Activated CD4-positive, alpha-beta memory T cell treated with anti-CD3 and anti-CD28 coated beads, Interleukin-2, amount 10 ng/mL, durations not matched to agents 7 days and 5 days (primary cell): ENCODE measurements at regions of chrX and their contacts with region 1.

Region 1: DNA sequence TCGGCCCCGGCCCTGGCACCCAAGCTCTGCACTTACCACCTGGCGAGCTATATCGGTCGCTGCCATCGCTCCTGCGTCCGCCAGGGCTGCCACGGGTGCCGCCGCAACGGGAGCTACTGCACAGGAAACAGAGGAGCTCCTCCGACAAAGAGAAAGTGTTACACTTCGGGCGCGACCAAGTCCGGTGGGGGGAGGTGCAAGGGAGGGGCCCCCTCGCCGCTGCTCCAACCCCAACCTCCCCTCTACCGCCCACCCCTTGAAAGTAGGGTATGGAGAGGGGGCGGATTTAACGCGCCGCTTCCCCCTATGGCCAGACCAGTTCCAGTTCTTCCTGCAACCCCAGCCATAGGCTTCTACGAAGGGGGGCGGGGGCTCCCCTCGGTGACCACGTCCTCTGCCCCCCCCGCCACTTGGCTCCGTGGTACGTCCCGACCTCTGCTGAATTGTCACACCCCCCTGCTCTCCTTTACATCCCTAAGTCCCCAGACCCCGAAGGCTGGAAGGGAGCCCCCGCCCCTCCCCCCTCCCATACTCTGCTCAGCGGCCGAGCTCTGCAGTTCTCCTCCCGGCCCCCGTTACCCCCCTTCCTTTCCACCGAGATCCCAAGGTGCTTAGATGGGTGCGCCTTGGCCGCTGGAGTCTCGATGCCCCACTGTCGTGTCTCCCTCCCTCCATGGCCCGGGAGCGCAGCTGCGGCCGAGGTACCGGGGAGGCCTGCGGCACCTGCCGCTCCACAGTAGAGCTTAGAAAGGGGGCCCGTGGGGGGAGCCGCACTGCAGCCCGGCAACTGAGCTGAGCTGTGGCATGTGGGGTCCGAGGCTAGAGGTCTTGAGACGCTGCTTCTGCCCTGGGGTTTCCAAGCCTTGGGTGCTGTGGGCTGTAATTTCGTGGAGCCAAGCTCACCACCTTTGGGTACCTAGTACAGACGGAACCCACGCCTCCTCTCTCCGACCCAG is at the start of gene SEPTIN6:
- DNase-seq: peak; percentile 86
- H3K4me3 Mint-ChIP-seq: peak within 1 kb of the TSS; percentile 98
- H3K27ac Mint-ChIP-seq: peak within 1 kb of the TSS; percentile 100
- H3K4me1 Mint-ChIP-seq: peaks cover 17% of the 10 kb centered on the region
- H3K27me3 Mint-ChIP-seq: no peaks in the 10 kb centered on the region
- total RNA-seq, gene SEPTIN6: 214 to 219 TPM

Region 2: DNA sequence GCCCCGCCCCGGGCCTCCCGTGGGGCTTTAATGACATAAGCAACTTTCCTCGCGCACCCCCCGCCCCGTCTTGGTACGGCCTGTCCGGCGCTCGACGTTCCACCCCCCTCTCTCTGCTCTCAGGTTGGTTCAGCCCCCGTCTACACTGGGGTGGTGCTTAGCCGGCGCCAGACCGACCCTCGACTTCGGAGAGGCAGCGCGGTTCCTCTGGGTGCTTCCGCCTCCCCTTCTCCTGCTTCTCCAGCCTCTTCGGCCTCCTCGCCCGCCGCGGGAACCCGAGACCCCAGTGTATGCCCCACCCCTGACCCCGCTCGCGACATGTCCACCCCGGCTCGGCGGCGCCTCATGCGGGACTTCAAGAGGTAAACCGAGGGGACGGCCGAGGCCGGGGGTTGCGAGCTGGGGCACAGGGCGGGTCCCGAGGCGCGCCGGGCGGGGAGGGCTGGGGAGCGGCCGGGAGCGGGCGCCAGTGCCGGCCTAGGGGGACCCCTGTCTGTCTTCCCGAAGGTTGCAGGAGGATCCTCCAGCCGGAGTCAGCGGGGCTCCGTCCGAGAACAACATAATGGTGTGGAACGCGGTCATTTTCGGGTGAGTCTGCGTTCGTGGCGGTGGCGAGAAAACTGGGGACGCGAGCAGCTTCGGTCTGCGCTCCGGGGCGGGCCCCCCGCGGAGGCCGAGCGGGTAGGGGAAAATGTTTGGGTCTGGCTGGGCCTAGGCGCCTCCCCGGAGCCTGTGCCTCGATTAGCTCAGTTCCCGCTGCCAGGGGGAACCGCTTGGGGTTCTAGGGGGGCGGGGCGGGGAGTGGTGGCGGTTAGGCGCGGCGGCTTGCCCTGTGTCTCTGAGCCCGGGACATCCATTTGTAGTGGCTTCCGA is 118.7 kb before region 1 on chrX and contains the start of gene UBE2A:
- CTCF ChIA-PET with region 1: no interaction called
- POLR2A ChIA-PET with region 1: interaction called, 17 read pairs
- DNase-seq: peak; percentile 88
- H3K4me3 Mint-ChIP-seq: peak within 1 kb of the TSS; percentile 93
- H3K27ac Mint-ChIP-seq: peak within 1 kb of the TSS; percentile 81
- H3K4me1 Mint-ChIP-seq: peaks cover 30% of the 10 kb centered on the region
- H3K27me3 Mint-ChIP-seq: no peaks in the 10 kb centered on the region
- total RNA-seq, gene UBE2A: 76.2 to 79.6 TPM

Region 3: GRCh38 chrX:119647552-119648420 is 45.5 kb before region 1 on chrX:
- CTCF ChIA-PET with region 1: interaction called, 3 read pairs
- POLR2A ChIA-PET with region 1: interaction called, 44 read pairs
- DNase-seq: peak; percentile 70
- H3K4me3 Mint-ChIP-seq: no peak overlapping the region
- H3K27ac Mint-ChIP-seq: peak overlapping the region; percentile 89
- H3K4me1 Mint-ChIP-seq: peaks cover 38% of the 10 kb centered on the region
- H3K27me3 Mint-ChIP-seq: no peaks in the 10 kb centered on the region

Region 4: GRCh38 chrX:119729408-119730201 is 36.3 kb after region 1 on chrX:
- CTCF ChIA-PET with region 1: interaction called, 45 read pairs
- POLR2A ChIA-PET with region 1: interaction called, 48 read pairs
- DNase-seq: peak; percentile 71
- H3K4me3 Mint-ChIP-seq: no peak overlapping the region
- H3K27ac Mint-ChIP-seq: no peak overlapping the region
- H3K4me1 Mint-ChIP-seq: peaks cover 6% of the 10 kb centered on the region
- H3K27me3 Mint-ChIP-seq: no peaks in the 10 kb centered on the region

Region 5: DNA sequence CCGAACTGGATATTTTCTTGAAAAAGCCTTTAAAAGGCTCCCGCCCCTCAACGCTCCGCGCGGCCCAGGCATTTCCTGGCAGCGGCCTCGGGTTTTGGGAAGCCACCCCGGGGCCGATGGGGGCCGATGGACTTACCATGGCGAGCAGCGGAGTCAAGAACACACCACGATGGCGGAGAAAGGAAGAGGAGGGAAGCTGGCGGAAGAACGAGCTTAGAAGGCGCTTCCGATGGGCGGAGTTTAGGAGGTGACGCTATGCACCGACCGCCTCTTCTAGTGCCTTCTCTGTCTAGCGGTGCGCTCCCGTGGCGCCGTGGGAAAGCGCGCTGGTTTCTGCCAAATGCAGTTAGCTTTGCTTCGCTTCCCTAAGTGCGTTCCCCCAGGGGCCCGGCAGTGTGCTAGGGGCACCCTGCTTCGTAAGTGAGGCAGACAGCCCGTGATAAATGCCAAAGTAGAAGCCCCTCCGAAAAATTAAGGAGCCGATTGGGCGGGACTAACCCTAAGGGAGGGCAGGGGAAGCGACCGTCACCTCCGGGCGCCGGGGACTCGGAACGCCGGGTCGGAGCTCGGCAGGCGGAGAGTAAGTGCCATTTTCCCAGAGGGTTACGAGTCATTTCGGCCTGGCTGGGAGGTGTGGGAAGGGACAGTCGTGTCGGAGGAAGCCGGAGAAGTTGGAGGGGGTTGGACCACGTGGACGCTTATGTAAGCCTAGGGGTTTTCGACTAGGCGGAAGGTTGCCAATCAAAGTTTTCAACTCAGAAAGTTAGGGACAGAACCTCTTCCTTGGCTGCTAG is 98.3 kb after region 1 on chrX and contains the start of gene RPL39:
- CTCF ChIA-PET with region 1: interaction called, 8 read pairs
- POLR2A ChIA-PET with region 1: interaction called, 21 read pairs
- DNase-seq: peak; percentile 85
- H3K4me3 Mint-ChIP-seq: peak within 1 kb of the TSS; percentile 93
- H3K27ac Mint-ChIP-seq: peak within 1 kb of the TSS; percentile 92
- H3K4me1 Mint-ChIP-seq: peaks cover 28% of the 10 kb centered on the region
- H3K27me3 Mint-ChIP-seq: no peaks in the 10 kb centered on the region
- total RNA-seq, gene RPL39: 2,056 to 2,070 TPM

Region 6: GRCh38 chrX:120213436-120214265 is 520.3 kb after region 1 on chrX:
- CTCF ChIA-PET with region 1: no interaction called
- POLR2A ChIA-PET with region 1: no interaction called
- DNase-seq: peak; percentile 57
- H3K4me3 Mint-ChIP-seq: no peak overlapping the region
- H3K27ac Mint-ChIP-seq: no peak overlapping the region
- H3K4me1 Mint-ChIP-seq: peaks cover 3% of the 10 kb centered on the region
- H3K27me3 Mint-ChIP-seq: no peaks in the 10 kb centered on the region